PC-9 (cell line): ENCODE measurements at regions of chr2 and their contacts with region 1.

Region 1: GRCh38 chr2:28751252-28751955 is at the start of gene PPP1CB:
- DNase-seq: peak; percentile 84 to 96
- H3K4me3 ChIP-seq: peak within 1 kb of the TSS; percentile 93
- H3K27ac ChIP-seq: peak within 1 kb of the TSS; percentile 90
- H3K4me1 ChIP-seq: peaks cover 43% of the 10 kb centered on the region
- H3K27me3 ChIP-seq: no peaks in the 10 kb centered on the region
- CTCF ChIP-seq: no peak; the same call in 1 of the 2 replicates
- total RNA-seq, gene PPP1CB: 231 and 260 TPM in 2 replicates

Region 2: GRCh38 chr2:27754138-27754588 is 997.2 kb before region 1 on chr2:
- CTCF ChIA-PET with region 1: no interaction called
- POLR2A ChIA-PET with region 1: interaction called, 23 read pairs
- intact Hi-C with region 1: no loop called
- DNase-seq: peak; percentile 79 to 87
- H3K4me3 ChIP-seq: peak overlapping the region; percentile 43; the same call in 1 of the 2 replicates
- H3K27ac ChIP-seq: peak overlapping the region; percentile 96
- H3K4me1 ChIP-seq: peaks cover 39% of the 10 kb centered on the region
- H3K27me3 ChIP-seq: no peaks in the 10 kb centered on the region
- CTCF ChIP-seq: peak; percentile 96

Region 3: DNA sequence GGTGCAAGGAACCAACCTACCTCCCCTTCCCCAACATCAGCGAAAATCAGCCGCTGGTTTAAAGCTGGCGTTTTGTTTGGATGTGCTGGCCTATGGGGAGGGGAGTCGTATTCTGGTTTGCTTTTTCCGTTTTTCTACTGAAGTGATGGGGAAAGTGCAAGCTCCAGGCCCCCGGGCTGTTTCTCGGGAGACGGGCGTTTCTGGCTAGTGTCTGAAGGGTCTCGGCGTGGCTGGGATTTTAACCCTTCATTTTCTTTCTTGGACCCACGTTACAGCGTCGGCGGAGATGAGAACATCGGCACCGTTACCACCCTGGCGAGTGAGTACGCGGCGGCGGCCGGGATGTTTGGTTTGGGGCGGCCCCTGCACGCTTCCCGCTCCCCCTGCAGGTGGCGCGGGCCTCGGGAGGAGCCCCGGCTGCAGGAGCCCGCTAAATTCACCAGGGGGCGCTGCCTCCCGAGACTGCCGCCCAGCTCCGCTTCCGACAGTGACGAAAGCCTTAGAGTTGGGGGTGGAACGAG is 184.8 kb before region 1 on chr2:
- CTCF ChIA-PET with region 1: interaction called, 4 read pairs
- POLR2A ChIA-PET with region 1: no interaction called
- intact Hi-C with region 1: loop called (anchors 1 kb)
- DNase-seq: peak; percentile 64 to 89
- H3K4me3 ChIP-seq: peak overlapping the region; percentile 79
- H3K27ac ChIP-seq: no peak overlapping the region
- H3K4me1 ChIP-seq: peaks cover 6% of the 10 kb centered on the region
- H3K27me3 ChIP-seq: no peaks in the 10 kb centered on the region
- CTCF ChIP-seq: peak; percentile 100

Region 4: GRCh38 chr2:28621172-28622100 is 130.0 kb before region 1 on chr2:
- CTCF ChIA-PET with region 1: interaction called, 3 read pairs
- POLR2A ChIA-PET with region 1: no interaction called
- intact Hi-C with region 1: loop called (anchors 1 kb)
- DNase-seq: peak; percentile 75 to 98
- H3K4me3 ChIP-seq: peak overlapping the region; percentile 28; the same call in 1 of the 2 replicates
- H3K27ac ChIP-seq: peak overlapping the region; percentile 88
- H3K4me1 ChIP-seq: peaks cover 82% of the 10 kb centered on the region
- H3K27me3 ChIP-seq: no peaks in the 10 kb centered on the region
- CTCF ChIP-seq: peak; percentile 79

Region 5: DNA sequence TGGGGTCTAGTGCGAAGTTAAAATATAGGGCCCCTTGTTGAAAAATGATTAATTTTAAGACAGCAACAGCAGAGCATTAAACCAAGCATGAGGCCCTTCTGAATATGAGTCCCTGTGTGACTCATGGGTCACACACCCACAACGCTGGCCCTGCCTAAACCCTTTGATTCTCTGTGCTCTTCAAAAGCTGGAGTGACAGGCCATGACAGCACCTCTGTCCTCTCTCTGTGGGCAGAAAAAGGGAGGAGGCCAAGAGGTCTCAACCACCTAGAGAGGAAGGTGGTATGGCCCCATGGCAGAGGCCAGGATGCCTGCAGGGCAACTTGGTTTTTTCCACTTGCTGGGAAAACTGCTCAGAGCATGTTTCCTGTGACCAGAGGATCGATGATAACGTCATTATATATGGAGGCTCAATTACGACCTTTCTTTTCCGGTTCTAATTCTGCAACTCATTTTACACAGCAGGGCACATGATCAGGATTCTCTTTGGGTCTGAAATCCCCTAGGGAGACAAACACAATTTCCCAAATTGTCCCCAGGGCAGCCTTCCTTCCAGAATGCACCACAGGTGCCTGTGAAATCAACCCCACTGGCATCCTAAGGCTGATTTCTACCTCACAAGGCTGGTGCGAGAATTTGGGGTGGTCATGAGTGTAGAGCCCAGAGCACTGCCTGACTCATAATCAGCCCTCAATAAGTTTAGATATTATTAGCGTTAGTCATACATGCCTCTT is 101.8 kb before region 1 on chr2:
- CTCF ChIA-PET with region 1: no interaction called
- POLR2A ChIA-PET with region 1: no interaction called
- intact Hi-C with region 1: loop called (anchors 2 kb)
- DNase-seq: peak; percentile 74 to 93
- H3K4me3 ChIP-seq: peak overlapping the region; percentile 7; the same call in 1 of the 2 replicates
- H3K27ac ChIP-seq: peak overlapping the region; percentile 87
- H3K4me1 ChIP-seq: peaks cover 61% of the 10 kb centered on the region
- H3K27me3 ChIP-seq: no peaks in the 10 kb centered on the region
- CTCF ChIP-seq: no peak

Region 6: DNA sequence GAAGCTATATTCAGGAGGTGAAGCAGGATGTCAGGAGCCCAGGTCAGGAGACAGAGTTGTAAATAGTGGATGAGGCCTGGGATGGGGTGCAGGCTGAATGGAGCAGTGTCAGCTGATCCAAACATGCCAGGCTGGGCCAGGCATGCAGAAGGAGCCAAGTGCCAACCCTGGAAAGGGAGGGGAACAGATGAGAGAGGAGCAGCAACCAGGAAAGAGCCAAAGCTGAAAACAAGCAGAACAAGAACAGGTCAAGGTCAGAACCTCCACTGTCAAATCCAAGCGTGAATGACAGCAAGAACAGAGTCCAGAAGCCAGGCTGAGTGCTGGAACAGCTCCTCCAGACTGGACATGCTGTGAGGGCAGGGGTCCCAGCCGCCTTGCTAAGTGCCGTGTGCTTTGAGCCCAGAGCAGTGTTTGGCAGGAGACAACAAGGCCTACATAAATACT is 49.0 kb before region 1 on chr2:
- CTCF ChIA-PET with region 1: no interaction called
- POLR2A ChIA-PET with region 1: no interaction called
- intact Hi-C with region 1: no loop called
- DNase-seq: no peak
- H3K4me3 ChIP-seq: no peak overlapping the region
- H3K27ac ChIP-seq: no peak overlapping the region
- H3K4me1 ChIP-seq: no peaks in the 10 kb centered on the region
- H3K27me3 ChIP-seq: no peaks in the 10 kb centered on the region
- CTCF ChIP-seq: no peak

Region 7: DNA sequence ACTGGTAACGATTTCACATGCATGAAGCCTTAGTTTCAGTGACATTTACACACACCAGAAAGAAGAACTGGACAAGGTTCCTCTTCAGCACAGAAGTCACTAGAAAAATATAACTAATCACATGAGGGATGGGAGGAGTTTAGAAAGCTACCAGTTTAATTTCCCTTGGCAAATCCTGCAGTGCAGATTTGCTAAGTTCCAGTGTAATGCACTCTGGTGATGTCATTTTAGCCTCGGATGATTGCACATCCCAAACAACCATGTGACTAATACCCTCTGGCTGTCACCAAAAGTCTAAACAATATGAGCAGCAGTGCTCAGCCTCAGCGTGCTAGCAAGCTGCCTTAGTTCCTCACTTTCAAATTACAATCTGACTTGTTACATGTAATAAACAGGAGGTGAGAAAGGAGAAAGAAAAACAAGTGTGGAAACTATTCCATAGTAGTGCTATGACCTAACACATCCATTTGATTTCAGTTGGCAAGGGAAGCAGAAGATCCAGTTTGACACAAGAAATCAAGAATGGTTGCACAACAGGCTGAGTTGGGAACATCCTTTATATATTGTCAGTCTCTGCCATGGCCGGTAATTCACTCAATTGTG is 35.0 kb before region 1 on chr2:
- CTCF ChIA-PET with region 1: no interaction called
- POLR2A ChIA-PET with region 1: no interaction called
- intact Hi-C with region 1: loop called (anchors 2 kb)
- DNase-seq: peak; percentile 60 to 96
- H3K4me3 ChIP-seq: peak overlapping the region; percentile 39; the same call in 1 of the 2 replicates
- H3K27ac ChIP-seq: peak overlapping the region; percentile 90
- H3K4me1 ChIP-seq: peaks cover 69% of the 10 kb centered on the region
- H3K27me3 ChIP-seq: no peaks in the 10 kb centered on the region
- CTCF ChIP-seq: no peak